Activated CD8-positive, alpha-beta T cell treated with anti-CD3 and anti-CD28 coated beads for 36 hours (primary cell): ENCODE measurements at regions of chr6 and their contacts with region 1.

Region 1: DNA sequence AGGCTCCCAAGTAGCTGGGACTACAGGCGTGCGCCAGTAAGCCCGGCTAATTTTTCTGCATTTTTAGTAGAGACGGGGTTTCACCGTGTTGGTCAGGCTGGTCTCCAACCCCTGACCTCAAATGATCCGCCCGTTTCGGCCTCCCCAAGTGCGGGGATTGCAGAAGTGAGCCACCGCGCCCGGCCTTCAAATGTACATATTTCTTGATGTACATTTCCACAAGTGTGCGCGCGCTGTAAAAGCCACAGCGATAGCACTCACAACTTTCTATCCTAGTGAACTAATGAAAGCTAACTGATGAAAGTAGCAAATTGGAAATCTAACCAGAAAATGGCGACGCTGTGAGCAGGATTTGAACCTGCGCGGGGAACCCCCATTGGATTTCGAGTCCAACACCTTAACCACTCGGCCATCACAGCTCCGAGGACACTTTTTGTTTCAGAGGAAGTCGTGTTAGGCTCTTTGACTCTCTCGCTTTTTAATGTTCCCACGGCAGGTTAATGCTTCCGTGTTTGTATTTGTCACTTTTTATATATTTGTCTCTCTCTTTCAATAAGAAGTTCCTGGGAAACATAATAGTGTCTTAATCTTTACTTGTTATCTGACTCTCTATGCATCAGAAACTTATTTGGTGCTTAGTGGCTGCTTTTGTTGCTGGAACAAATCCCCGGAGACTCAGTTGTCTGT is 199.4 kb upstream of the ZNF184 start:
- DNase-seq: peak; percentile 78
- ATAC-seq: peak; percentile 63
- H3K4me3 Mint-ChIP-seq: peak overlapping the region; percentile 18
- H3K27ac Mint-ChIP-seq: no peak overlapping the region
- H3K4me1 Mint-ChIP-seq: peaks cover 30% of the 10 kb centered on the region
- H3K27me3 Mint-ChIP-seq: peaks cover 63% of the 10 kb centered on the region
- CTCF ChIP-seq: no peak

Region 2: GRCh38 chr6:27295301-27296081 is 376.8 kb before region 1 on chr6:
- CTCF ChIA-PET with region 1: interaction called, 3 read pairs
- POLR2A ChIA-PET with region 1: interaction called, 3 read pairs
- intact Hi-C with region 1: loop called (anchors 10 kb)
- DNase-seq: no peak
- ATAC-seq: peak; percentile 20
- H3K4me3 Mint-ChIP-seq: no peak overlapping the region
- H3K27ac Mint-ChIP-seq: no peak overlapping the region
- H3K4me1 Mint-ChIP-seq: peaks cover 11% of the 10 kb centered on the region
- H3K27me3 Mint-ChIP-seq: peaks cover 77% of the 10 kb centered on the region
- CTCF ChIP-seq: no peak

Region 3: DNA sequence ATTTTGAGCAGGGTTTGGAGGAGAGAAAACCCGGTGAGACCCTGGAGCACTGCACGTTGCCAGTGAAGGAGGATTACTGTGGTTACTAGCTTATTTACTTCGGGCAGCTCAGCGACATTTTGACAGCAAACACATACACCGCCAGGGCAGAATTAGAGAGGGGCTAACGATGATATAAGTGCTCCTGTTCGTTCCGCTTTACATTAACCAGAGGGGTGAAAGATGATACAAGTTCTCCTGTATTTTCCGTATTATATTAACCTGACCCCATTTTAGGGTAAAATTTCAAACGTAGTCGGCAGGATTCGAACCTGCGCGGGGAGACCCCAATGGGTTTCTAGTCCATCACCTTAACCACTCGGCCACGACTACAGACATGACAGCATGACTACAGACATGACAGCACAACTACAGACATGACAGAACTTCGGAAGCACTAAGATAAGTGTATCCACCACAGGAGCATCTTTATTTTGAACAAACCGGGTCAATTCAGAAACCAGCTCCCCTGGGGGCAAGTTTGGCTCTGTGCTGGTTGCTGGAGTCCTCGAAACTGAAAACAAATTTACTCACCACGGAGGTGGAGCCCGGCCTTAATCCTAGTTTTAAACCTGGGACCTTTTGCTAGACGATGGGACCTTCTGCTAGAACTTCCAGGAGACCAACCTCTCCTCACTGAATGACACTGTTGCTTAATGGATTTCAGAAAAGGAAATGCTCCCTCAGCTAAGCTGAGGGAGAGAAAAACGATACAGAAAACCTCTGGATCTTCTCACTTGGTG is 118.9 kb before region 1 on chr6:
- CTCF ChIA-PET with region 1: no interaction called
- POLR2A ChIA-PET with region 1: no interaction called
- intact Hi-C with region 1: loop called (anchors 10 kb)
- DNase-seq: peak; percentile 69
- ATAC-seq: peak; percentile 80
- H3K4me3 Mint-ChIP-seq: peak overlapping the region; percentile 59
- H3K27ac Mint-ChIP-seq: no peak overlapping the region
- H3K4me1 Mint-ChIP-seq: peaks cover 8% of the 10 kb centered on the region
- H3K27me3 Mint-ChIP-seq: peaks cover 62% of the 10 kb centered on the region
- CTCF ChIP-seq: no peak